CD8-positive, alpha-beta memory T cell (primary cell): ENCODE measurements at regions of chr12 and their contacts with region 1.

Region 1: DNA sequence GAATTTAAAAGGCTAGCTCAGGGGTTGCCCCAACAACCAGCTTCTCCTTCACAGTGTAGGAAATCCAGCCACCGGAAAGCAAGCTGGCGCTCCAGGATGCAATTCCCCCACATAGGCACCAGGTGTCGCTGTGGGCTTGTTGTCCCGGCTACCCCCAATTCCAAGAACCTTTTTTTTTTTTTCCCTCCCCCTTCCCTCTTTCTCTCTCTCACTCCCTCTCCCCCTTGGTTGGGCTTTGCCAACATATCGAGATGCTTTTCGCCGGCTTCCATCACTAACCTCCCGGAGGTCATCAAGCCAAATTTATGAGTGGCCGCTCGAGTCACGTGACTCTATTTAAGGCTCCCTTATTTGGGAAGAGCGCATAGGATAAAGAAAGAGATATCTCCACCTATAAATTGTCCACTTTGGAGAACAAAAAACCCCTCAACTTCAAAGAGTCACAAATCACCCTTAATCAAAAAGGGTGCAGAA is at the start of gene HOXC5:
- DNase-seq: peak; percentile 42 to 77 (median 61)
- H3K4me3 ChIP-seq: no peak within 1 kb of the TSS
- H3K4me3 Mint-ChIP-seq: peak within 1 kb of the TSS; percentile 69 to 84 (median 78)
- H3K27ac ChIP-seq: no peak within 1 kb of the TSS
- H3K27ac Mint-ChIP-seq: peak within 1 kb of the TSS in 3 of 8 donors; percentile 33 to 88 (median 78)
- H3K4me1 ChIP-seq: peaks cover 20% of the 10 kb centered on the region
- H3K4me1 Mint-ChIP-seq: peaks cover 22 to 40% (median 26%) of the 10 kb centered on the region in 3 donors
- H3K27me3 ChIP-seq: peaks cover 71% of the 10 kb centered on the region
- H3K27me3 Mint-ChIP-seq: peaks cover 68 to 82% of the 10 kb centered on the region in 2 donors
- total RNA-seq, gene HOXC5: not detected

Region 2: GRCh38 chr12:54017878-54018467 is 14.7 kb before region 1 on chr12:
- CTCF ChIA-PET with region 1: interaction called, 27 read pairs
- POLR2A ChIA-PET with region 1: interaction called, 3 read pairs
- DNase-seq: peak; percentile 62 to 88 (median 73)
- H3K4me3 ChIP-seq: peak overlapping the region; percentile 86
- H3K4me3 Mint-ChIP-seq: peak overlapping the region; percentile 86 to 95 (median 91)
- H3K27ac ChIP-seq: peak overlapping the region; percentile 72
- H3K27ac Mint-ChIP-seq: peak overlapping the region in 7 of 8 donors; percentile 26 to 96 (median 70)
- H3K4me1 ChIP-seq: peaks cover 11% of the 10 kb centered on the region
- H3K4me1 Mint-ChIP-seq: peaks cover 15 to 34% (median 18%) of the 10 kb centered on the region in 3 donors
- H3K27me3 ChIP-seq: peaks cover 60% of the 10 kb centered on the region
- H3K27me3 Mint-ChIP-seq: peaks cover 63 to 76% of the 10 kb centered on the region in 2 donors

Region 3: GRCh38 chr12:54053751-54054741 is 21.4 kb after region 1 on chr12 and contains the start of gene HOXC4:
- CTCF ChIA-PET with region 1: interaction called, 19 read pairs
- POLR2A ChIA-PET with region 1: no interaction called
- DNase-seq: peak; percentile 27 to 62 (median 37)
- H3K4me3 ChIP-seq: peak within 1 kb of the TSS; percentile 78
- H3K4me3 Mint-ChIP-seq: peak within 1 kb of the TSS; percentile 88 to 96 (median 92)
- H3K27ac ChIP-seq: peak within 1 kb of the TSS; percentile 81
- H3K27ac Mint-ChIP-seq: peak within 1 kb of the TSS; percentile 76 to 100 (median 90)
- H3K4me1 ChIP-seq: peaks cover 40% of the 10 kb centered on the region
- H3K4me1 Mint-ChIP-seq: peaks cover 25 to 45% (median 39%) of the 10 kb centered on the region in 3 donors
- H3K27me3 ChIP-seq: peaks cover 49% of the 10 kb centered on the region
- H3K27me3 Mint-ChIP-seq: peaks cover 34 to 86% of the 10 kb centered on the region in 2 donors
- total RNA-seq, gene HOXC4: 1.3 to 1.4 TPM

Region 4: GRCh38 chr12:54201001-54201794 is 168.5 kb after region 1 on chr12:
- CTCF ChIA-PET with region 1: interaction called, 56 read pairs
- POLR2A ChIA-PET with region 1: no interaction called
- DNase-seq: peak; percentile 58 to 77 (median 60)
- H3K4me3 ChIP-seq: no peak overlapping the region
- H3K4me3 Mint-ChIP-seq: no peak overlapping the region
- H3K27ac ChIP-seq: no peak overlapping the region
- H3K27ac Mint-ChIP-seq: no peak overlapping the region
- H3K4me1 ChIP-seq: no peaks in the 10 kb centered on the region
- H3K4me1 Mint-ChIP-seq: no peaks in the 10 kb centered on the region
- H3K27me3 ChIP-seq: peaks cover 17% of the 10 kb centered on the region
- H3K27me3 Mint-ChIP-seq: peaks cover 57 to 79% of the 10 kb centered on the region in 2 donors

Region 5: GRCh38 chr12:54214553-54215406 is 182.1 kb after region 1 on chr12:
- CTCF ChIA-PET with region 1: interaction called, 11 read pairs
- POLR2A ChIA-PET with region 1: no interaction called
- DNase-seq: peak; percentile 88 to 91 (median 89)
- H3K4me3 ChIP-seq: peak overlapping the region; percentile 56
- H3K4me3 Mint-ChIP-seq: peak overlapping the region; percentile 75 to 91 (median 78)
- H3K27ac ChIP-seq: no peak overlapping the region
- H3K27ac Mint-ChIP-seq: peak overlapping the region in 2 of 8 donors; percentile 74 to 75
- H3K4me1 ChIP-seq: peaks cover 33% of the 10 kb centered on the region
- H3K4me1 Mint-ChIP-seq: peaks cover 25 to 38% (median 30%) of the 10 kb centered on the region in 3 donors
- H3K27me3 ChIP-seq: no peaks in the 10 kb centered on the region
- H3K27me3 Mint-ChIP-seq: peaks cover 11 to 37% of the 10 kb centered on the region in 2 donors